ENCODE measurements at regions of chr10 and their contacts with region 1.

Region 1: DNA sequence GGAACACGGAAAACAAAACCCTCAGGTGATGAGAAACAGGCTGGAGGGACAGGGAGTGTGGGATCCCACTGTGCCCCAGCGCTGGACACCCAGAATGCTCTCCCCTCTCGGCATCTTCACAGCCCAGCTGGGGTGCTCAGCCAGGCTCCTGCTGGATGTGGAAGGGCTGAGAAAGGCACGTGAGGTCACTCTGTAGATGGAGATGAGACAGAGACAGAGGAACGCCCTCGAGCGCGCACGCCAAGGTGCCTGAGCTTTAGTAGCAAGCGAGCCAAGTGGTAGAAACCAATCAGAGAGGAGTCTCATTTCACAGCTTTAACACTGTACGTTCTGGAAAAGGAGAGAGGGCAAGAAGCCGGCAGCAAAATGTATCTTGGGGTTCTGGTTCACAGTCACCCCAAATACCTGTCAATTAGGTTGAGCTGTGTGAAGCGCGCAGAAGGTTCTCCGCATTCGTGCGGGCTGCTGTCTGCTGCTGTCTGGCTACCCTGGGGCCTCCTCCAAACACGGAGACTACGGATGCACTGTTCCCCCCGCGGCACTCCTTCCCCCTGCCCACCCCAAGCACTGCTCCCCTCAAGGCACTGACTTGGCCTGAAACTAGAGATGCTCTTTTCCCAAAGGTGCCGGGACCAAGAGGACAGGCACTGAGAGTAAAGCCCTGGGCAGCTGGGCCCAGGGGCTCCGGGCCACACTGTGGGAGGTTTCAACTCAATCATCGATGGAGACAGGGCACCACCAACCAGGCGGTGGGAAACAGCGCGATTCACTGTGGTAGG is 91.4 kb downstream of the ZRANB1 start:
- DNase-seq: peak in 2 of 3 donors; percentile 6 to 45
- ATAC-seq: no peak
- H3K4me3 ChIP-seq: no peak overlapping the region
- H3K27ac ChIP-seq: no peak overlapping the region
- H3K4me1 ChIP-seq: peaks cover 18% of the 10 kb centered on the region
- H3K27me3 ChIP-seq: no peaks in the 10 kb centered on the region

Region 2: GRCh38 chr10:124708922-124709520 is 324.3 kb before region 1 on chr10:
- intact Hi-C with region 1: no loop called
- DNase-seq: peak in 1 of 3 donors; percentile 23
- ATAC-seq: no peak
- H3K4me3 ChIP-seq: no peak overlapping the region
- H3K27ac ChIP-seq: peak overlapping the region; percentile 73
- H3K4me1 ChIP-seq: peaks cover 65% of the 10 kb centered on the region
- H3K27me3 ChIP-seq: no peaks in the 10 kb centered on the region

Region 3: DNA sequence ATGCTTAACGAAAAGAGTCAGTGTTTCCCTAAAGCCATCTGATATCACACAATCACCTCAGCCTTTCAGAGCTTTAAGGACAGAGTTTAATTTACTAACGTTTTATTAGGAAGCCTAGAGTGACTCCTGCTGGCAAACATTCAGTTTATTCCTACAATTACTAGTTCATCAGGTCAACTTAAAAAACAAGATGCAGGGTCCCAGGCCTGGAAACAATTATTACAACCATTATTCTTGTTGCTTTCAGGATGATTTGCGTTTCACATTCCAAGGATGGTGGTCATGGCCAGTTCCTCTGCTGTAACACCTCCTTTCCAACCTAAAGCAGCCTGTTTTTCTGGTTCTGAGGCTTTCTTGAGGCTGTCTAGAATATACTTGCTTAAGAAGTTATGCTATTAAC is 287.7 kb before region 1 on chr10:
- intact Hi-C with region 1: no loop called
- DNase-seq: no peak
- ATAC-seq: no peak
- H3K4me3 ChIP-seq: no peak overlapping the region
- H3K27ac ChIP-seq: no peak overlapping the region
- H3K4me1 ChIP-seq: no peaks in the 10 kb centered on the region
- H3K27me3 ChIP-seq: no peaks in the 10 kb centered on the region

Region 4: DNA sequence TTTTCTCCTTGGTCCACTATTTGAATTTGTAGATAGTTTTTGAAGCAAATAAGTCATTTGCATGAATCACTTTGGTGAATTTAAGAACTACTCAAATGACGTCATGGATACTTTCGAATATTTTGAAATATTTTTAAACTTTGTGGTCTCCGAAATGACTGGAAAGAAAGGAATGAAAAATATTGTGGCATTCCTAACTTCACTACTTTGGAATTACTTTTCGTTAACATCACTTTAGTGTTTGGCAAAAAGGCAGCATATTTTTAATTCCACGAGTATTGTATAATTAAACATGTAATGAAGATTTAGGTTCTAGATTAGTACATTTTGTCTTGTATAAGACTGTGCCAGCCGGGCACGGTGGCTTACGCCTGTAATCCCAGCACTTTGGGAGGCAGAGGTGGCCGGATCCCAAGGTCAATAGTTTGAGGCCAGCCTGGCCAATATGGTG is 126.8 kb before region 1 on chr10:
- intact Hi-C with region 1: no loop called
- DNase-seq: no peak
- ATAC-seq: no peak
- H3K4me3 ChIP-seq: no peak overlapping the region
- H3K27ac ChIP-seq: no peak overlapping the region
- H3K4me1 ChIP-seq: no peaks in the 10 kb centered on the region
- H3K27me3 ChIP-seq: no peaks in the 10 kb centered on the region

Region 5: DNA sequence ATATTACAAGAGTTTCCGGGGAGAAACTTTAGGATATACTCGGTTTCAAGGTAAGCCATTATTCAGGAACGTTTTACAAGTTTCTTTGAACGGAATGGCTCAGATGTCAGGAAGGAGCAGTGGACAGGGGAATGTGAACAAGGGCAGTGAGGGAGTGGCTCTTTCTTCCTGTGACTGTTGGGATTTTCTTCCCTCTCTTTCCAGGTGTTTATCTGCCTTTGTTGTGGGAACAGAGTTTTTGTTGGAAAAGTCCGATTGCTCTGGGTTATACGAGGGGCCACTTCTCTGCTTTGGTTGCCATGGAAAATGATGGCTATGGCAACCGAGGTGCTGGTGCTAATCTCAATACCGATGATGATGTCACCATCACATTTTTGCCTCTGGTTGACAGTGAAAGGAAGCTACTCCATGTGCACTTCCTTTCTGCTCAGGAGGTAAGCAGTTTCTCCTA is 50.1 kb before region 1 on chr10:
- intact Hi-C with region 1: no loop called
- DNase-seq: no peak
- ATAC-seq: peak in 1 of 2 donors; percentile 61
- H3K4me3 ChIP-seq: no peak overlapping the region
- H3K27ac ChIP-seq: no peak overlapping the region
- H3K4me1 ChIP-seq: no peaks in the 10 kb centered on the region
- H3K27me3 ChIP-seq: no peaks in the 10 kb centered on the region

Region 6: GRCh38 chr10:125017547-125018298 is 15.6 kb before region 1 on chr10:
- intact Hi-C with region 1: loop called in 1 of 4 experiments (anchors 1 kb)
- DNase-seq: peak in 2 of 3 donors; percentile 39 to 48
- ATAC-seq: no peak
- H3K4me3 ChIP-seq: no peak overlapping the region
- H3K27ac ChIP-seq: no peak overlapping the region
- H3K4me1 ChIP-seq: peaks cover 55% of the 10 kb centered on the region
- H3K27me3 ChIP-seq: no peaks in the 10 kb centered on the region

Measured in right cardiac atrium (tissue), 5 donors.